AG04450 (cell line): ENCODE measurements at regions of chr12 and their contacts with region 1.

Region 1: GRCh38 chr12:120971299-120972179 is 6.8 kb upstream of the HNF1A start:
- DNase-seq: peak; percentile 45
- H3K4me3 ChIP-seq: no peak overlapping the region
- H3K27ac ChIP-seq: no peak overlapping the region
- H3K27me3 ChIP-seq: peaks cover 11% of the 10 kb centered on the region
- CTCF ChIP-seq: peak; percentile 82

Region 2: DNA sequence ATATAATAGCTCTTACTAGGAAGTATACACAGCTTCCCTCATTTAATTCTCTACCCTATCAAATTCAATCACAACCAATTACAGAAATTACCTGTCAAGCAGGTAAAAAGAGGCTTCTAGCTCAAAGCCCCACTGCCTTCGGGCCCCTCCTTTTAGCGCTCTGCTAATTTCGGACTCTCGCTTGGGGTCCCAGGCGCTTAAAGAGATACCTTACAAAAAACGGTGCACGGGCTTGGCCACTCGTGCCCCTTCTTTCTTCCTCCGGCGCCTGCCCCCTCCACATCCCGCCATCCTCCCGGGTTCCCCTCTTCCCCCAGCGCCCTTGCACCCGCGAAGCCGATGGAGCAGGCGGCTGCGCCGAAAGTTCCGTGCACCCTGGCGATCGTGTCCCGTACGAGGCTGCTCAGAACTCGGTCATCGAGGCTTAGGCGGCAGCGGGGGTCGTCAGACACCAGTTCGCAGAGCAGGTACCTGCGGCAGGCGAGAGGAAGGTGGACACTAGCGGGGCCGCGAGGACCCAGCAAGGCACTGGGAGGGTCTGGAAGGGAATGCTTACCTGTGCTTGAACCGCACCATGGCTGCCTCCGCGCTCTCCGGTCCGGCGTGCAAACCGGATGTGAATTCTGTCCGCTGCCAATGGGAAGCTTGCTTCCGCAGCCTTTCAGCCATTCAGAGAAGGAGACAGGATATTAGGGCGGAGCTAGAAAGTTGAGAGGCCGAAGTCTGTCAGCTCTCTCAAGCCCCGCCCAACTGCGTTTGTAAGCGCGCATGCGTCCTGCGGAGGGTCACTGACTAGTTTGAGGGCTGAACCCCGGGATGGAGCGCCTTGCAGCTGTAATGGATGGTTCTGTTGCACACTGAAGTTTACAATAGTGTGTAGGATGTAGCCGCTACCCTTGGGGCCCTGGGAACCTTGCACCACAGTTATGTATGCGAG is 390.5 kb before region 1 on chr12 and contains the start of gene POP5:
- CTCF ChIA-PET with region 1: interaction called, 94 read pairs
- POLR2A ChIA-PET with region 1: interaction called, 5 read pairs
- DNase-seq: peak; percentile 95
- H3K4me3 ChIP-seq: peak within 1 kb of the TSS; percentile 100
- H3K27ac ChIP-seq: peak within 1 kb of the TSS; percentile 47
- H3K27me3 ChIP-seq: peaks cover 8% of the 10 kb centered on the region
- CTCF ChIP-seq: no peak
- polyA plus RNA-seq, gene POP5: 49.8 and 54.0 TPM in 2 replicates

Region 3: GRCh38 chr12:120586206-120586605 is 385.3 kb before region 1 on chr12:
- CTCF ChIA-PET with region 1: interaction called, 94 read pairs
- POLR2A ChIA-PET with region 1: interaction called, 5 read pairs
- DNase-seq: no peak
- H3K4me3 ChIP-seq: no peak overlapping the region
- H3K27ac ChIP-seq: no peak overlapping the region
- H3K27me3 ChIP-seq: peaks cover 16% of the 10 kb centered on the region
- CTCF ChIP-seq: no peak

Region 4: GRCh38 chr12:120719496-120720233 is 251.9 kb before region 1 on chr12:
- CTCF ChIA-PET with region 1: interaction called, 3 read pairs
- POLR2A ChIA-PET with region 1: interaction called, 12 read pairs
- DNase-seq: no peak
- H3K4me3 ChIP-seq: no peak overlapping the region
- H3K27ac ChIP-seq: peak overlapping the region; percentile 52
- H3K27me3 ChIP-seq: no peaks in the 10 kb centered on the region
- CTCF ChIP-seq: no peak

Region 5: DNA sequence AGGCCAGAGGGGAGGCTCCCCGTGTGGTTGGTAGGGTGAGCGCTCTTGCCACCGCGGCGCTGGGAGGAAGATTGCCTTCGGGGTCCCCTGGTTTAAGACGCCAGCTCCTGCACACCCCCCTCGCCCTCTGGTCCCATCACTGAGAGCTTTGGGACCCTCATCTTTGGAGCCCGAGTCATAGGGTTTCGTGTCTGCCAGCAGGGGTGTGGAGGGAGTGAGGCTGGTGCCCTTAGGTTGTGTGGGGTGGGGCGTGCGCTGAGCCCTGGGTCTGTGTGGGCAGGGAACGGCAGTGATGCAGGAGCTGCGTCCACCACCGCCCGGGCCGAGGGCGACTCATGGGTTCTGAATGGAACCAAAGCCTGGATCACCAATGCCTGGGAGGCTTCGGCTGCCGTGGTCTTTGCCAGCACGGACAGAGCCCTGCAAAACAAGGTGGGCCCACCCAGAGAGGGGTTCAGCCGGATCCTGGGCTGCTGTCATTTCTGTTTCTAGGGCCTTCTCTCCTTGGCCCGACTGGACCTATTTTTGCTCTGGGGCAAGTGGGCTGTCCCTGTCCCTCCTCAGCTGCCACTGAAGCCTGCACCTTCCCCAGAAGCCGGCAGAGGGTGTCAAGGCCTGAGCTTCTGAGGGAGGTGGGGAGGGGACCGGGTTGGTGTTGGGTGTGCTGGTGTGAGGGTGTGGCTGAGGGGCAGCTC is 233.8 kb before region 1 on chr12:
- CTCF ChIA-PET with region 1: interaction called, 16 read pairs
- POLR2A ChIA-PET with region 1: no interaction called
- DNase-seq: no peak
- H3K4me3 ChIP-seq: no peak overlapping the region
- H3K27ac ChIP-seq: no peak overlapping the region
- H3K27me3 ChIP-seq: no peaks in the 10 kb centered on the region
- CTCF ChIP-seq: peak; percentile 51

Region 6: DNA sequence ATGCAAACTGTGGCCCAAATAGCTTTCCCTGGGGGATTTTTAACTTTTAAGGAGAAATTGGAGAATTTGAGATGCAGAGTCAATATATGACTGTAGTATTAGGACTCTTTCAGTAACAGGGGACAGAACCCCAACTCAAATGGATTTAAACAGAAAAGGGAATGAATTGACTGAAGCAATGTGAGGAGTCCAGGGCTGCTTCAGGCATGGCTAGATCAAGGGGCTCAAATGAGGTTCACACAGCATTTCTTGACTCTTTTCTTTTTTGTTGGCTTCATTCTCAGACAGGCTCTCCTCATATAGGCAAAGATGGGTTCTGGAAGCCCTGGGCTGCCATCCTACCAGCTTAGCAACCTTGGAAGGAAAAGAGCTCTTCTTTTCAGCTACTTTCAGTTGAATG is 20.4 kb after region 1 on chr12:
- CTCF ChIA-PET with region 1: no interaction called
- POLR2A ChIA-PET with region 1: no interaction called
- DNase-seq: no peak
- H3K4me3 ChIP-seq: no peak overlapping the region
- H3K27ac ChIP-seq: no peak overlapping the region
- H3K27me3 ChIP-seq: peaks cover 12% of the 10 kb centered on the region
- CTCF ChIP-seq: no peak